Lower leg skin (tissue), 4 donors: ENCODE measurements at regions of chr7 and their contacts with region 1.

Region 1: GRCh38 chr7:26864309-26865093 is at the start of gene SKAP2:
- DNase-seq: peak; percentile 98 to 100
- H3K4me3 ChIP-seq: peak within 1 kb of the TSS; percentile 56
- CTCF ChIP-seq: no peak
- POLR2A ChIP-seq: peak in 1 of 2 donors; percentile 23
- total RNA-seq, gene SKAP2: 13.2 to 18.2 (median 15.0) TPM

Region 2: GRCh38 chr7:26789481-26790184 is 74.9 kb before region 1 on chr7:
- intact Hi-C with region 1: no loop called
- DNase-seq: no peak
- H3K4me3 ChIP-seq: no peak overlapping the region
- CTCF ChIP-seq: no peak
- POLR2A ChIP-seq: no peak

Region 3: DNA sequence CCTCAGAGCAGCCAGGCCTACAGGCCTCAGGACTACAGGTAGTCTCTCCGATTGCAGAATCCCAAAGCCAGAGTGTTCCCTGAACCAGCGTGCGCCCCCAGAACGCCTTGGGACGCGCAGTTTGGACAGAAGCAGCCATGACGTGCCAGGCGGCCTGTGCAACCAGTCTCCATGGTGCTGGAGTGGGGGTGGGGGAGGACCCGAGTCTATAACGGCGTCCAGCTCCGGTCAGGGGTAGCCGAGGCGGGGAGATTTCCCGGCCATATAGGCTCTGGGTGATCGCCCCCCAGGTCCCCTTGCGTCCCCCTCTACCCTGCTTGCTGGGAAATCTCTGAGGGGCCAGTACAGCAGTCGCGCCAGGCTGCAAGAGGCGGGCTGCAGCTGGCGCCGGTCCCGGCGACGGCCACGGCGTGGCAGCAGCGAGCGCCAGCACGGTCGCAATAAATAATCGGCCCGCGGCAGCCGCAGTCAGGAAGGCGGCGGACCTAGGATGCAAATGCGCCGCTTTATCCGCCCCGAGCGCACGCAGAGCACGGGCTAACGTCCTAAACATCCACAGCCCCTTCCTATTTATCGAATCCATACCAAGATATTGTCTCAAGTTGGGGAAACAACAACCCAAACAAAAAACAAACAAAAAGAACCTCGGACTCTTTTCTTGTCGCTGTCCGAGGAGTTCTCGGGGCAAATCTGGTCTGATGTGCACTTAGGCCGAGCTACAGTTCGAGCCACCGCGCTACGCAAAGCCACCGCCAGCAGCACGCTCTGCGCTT is 286.3 kb after region 1 on chr7:
- intact Hi-C with region 1: loop called (anchors 5 kb)
- DNase-seq: peak; percentile 65 to 96
- H3K4me3 ChIP-seq: peak overlapping the region; percentile 45
- CTCF ChIP-seq: peak in 1 of 3 donors; percentile 38
- POLR2A ChIP-seq: no peak